Astrocyte of the cerebellum (primary cell): ENCODE measurements at regions of chr1 and their contacts with region 1.

Region 1: DNA sequence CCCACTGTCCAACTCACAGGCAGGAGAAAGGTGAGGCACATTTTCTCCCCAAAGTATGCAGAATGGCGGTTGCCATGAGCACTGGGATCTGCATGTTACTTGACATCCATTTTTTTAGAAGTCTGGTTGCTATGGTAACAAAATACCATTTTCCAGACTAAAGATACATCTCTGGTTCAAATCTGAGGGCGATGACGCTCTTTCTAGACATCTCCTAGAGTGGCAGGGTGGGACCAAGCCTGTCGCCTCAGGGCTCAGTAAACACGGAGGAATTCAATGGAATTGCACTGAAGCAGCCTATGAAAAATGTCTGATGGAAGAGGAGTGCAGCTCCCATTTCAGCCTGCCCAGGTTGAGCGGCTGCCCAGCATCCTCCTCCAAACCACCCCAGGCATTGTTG is 21.5 kb upstream of the FAM43B start:
- DNase-seq: no peak
- H3K4me3 ChIP-seq: no peak overlapping the region
- CTCF ChIP-seq: no peak

Region 2: DNA sequence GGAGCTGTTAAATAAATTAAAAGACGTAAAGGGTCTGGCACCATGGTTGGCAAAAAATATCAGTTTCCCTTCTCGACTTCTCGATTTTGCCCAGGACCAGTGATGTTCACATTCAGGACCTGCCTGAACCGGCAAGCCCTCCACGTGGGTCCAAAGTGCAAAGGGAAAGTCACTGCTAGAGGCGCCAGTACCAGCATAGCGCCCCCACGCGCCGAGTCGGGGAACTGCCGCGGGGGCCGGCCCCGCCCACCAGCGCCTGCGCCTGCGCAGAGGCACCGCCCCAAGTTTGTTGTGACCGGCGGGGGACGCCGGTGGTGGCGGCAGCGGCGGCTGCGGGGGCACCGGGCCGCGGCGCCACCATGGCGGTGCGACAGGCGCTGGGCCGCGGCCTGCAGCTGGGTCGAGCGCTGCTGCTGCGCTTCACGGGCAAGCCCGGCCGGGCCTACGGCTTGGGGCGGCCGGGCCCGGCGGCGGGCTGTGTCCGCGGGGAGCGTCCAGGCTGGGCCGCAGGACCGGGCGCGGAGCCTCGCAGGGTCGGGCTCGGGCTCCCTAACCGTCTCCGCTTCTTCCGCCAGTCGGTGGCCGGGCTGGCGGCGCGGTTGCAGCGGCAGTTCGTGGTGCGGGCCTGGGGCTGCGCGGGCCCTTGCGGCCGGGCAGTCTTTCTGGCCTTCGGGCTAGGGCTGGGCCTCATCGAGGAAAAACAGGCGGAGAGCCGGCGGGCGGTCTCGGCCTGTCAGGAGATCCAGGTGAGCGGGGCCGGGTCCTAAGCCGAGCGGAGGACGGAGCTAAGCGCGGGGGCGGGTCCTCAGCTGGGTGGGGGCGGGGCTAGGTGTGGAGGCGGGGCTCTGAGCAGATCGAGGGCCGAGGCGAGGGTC is 102.5 kb after region 1 on chr1 and contains the start of gene PINK1:
- in situ Hi-C with region 1: loop called (anchors 25 kb)
- DNase-seq: peak; percentile 23
- H3K4me3 ChIP-seq: peak within 1 kb of the TSS; percentile 75
- CTCF ChIP-seq: peak; percentile 93